BJ (cell line): ENCODE measurements at regions of chr7 and their contacts with region 1.

Region 1: DNA sequence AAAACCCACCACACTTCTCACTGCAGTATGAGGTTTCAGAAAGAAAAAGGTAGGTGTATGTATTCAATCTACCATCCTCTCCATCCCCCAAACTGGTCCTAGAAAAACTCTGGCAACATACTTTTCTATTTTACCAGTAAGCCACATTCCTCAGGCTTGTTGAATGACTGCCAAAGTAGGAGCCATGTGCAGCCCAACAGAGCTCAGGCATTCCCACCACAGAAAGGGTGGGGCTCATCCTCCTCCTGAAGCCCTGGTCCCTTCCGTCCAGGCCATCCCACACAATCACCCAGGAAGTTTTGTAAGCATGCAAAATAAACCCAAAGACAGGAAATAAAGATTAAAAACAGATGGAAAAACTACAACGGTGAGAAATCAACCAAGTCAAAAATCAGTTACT is 57.2 kb downstream of the MAD1L1 start:
- DNase-seq: peak; percentile 96
- H3K4me3 ChIP-seq: no peak overlapping the region
- H3K27me3 ChIP-seq: no peaks in the 10 kb centered on the region
- CTCF ChIP-seq: no peak

Region 2: GRCh38 chr7:2138146-2138765 is 37.3 kb before region 1 on chr7:
- CTCF ChIA-PET with region 1: no interaction called
- POLR2A ChIA-PET with region 1: no interaction called
- DNase-seq: no peak
- H3K4me3 ChIP-seq: no peak overlapping the region
- H3K27me3 ChIP-seq: no peaks in the 10 kb centered on the region
- CTCF ChIP-seq: no peak

Region 3: GRCh38 chr7:2266908-2267307 is 91.4 kb after region 1 on chr7:
- CTCF ChIA-PET with region 1: no interaction called
- POLR2A ChIA-PET with region 1: interaction called, 25 read pairs
- DNase-seq: peak; percentile 28
- H3K4me3 ChIP-seq: no peak overlapping the region
- H3K27me3 ChIP-seq: no peaks in the 10 kb centered on the region
- CTCF ChIP-seq: no peak